ENCODE measurements at regions of chr14 and their contacts with region 1.

Region 1: GRCh38 chr14:90697577-90698206 is 118.5 kb downstream of the TTC7B start:
- DNase-seq: peak; percentile 87
- H3K4me3 ChIP-seq: peak overlapping the region; percentile 26
- H3K27ac ChIP-seq: peak overlapping the region; percentile 85
- H3K4me1 ChIP-seq: peaks cover 46% of the 10 kb centered on the region
- H3K27me3 ChIP-seq: no peaks in the 10 kb centered on the region
- CTCF ChIP-seq: peak; percentile 99

Region 2: GRCh38 chr14:90301668-90302090 is 396.0 kb before region 1 on chr14:
- intact Hi-C with region 1: loop called (anchors 2 kb)
- DNase-seq: no peak
- H3K4me3 ChIP-seq: no peak overlapping the region
- H3K27ac ChIP-seq: peak overlapping the region; percentile 71
- H3K4me1 ChIP-seq: peaks cover 41% of the 10 kb centered on the region
- H3K27me3 ChIP-seq: no peaks in the 10 kb centered on the region
- CTCF ChIP-seq: peak; percentile 71

Region 3: GRCh38 chr14:90399541-90400444 is 297.9 kb before region 1 on chr14:
- intact Hi-C with region 1: loop called (anchors 10 kb)
- DNase-seq: peak; percentile 88
- H3K4me3 ChIP-seq: peak overlapping the region; percentile 99
- H3K27ac ChIP-seq: peak overlapping the region; percentile 96
- H3K4me1 ChIP-seq: peaks cover 79% of the 10 kb centered on the region
- H3K27me3 ChIP-seq: no peaks in the 10 kb centered on the region
- CTCF ChIP-seq: peak; percentile 99

Region 4: DNA sequence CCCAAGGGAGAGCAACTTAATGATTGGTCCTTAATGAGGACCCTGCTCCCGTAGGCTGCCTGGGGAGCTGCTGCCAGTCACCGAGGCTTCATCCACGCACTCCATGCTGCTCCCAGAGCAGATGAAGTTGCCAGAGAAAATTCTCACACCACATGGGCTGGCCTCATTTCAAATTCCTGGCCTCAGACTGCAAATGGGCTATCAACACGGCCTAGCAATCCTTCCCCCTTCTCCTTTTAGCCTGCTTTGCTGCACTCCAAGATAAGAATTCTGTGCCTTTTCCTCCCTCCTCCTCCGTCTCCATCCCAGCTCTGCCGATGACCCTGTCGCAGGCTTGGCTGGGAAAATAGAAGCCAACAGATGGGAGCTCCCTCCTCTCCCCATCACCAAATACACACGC is 405.4 kb after region 1 on chr14:
- intact Hi-C with region 1: no loop called
- DNase-seq: no peak
- H3K4me3 ChIP-seq: no peak overlapping the region
- H3K27ac ChIP-seq: no peak overlapping the region
- H3K4me1 ChIP-seq: peaks cover 8% of the 10 kb centered on the region
- H3K27me3 ChIP-seq: no peaks in the 10 kb centered on the region
- CTCF ChIP-seq: no peak

Measured in left ventricle myocardium inferior (tissue), 1 donor.